Activated B cell treated with CpG ODN at 0.5 μM for 24 hours (primary cell): ENCODE measurements at regions of chr16 and their contacts with region 1.

Region 1: GRCh38 chr16:70454222-70455034 is at the start of gene FCSK:
- DNase-seq: peak; percentile 78
- ATAC-seq: peak; percentile 92
- H3K4me3 Mint-ChIP-seq: peak within 1 kb of the TSS; percentile 88
- H3K27ac Mint-ChIP-seq: peak within 1 kb of the TSS; percentile 89
- H3K4me1 Mint-ChIP-seq: peaks cover 16% of the 10 kb centered on the region
- H3K27me3 Mint-ChIP-seq: no peaks in the 10 kb centered on the region
- CTCF ChIP-seq: no peak
- total RNA-seq, gene FCSK: 20.1 and 21.4 TPM in 2 replicates

Region 2: DNA sequence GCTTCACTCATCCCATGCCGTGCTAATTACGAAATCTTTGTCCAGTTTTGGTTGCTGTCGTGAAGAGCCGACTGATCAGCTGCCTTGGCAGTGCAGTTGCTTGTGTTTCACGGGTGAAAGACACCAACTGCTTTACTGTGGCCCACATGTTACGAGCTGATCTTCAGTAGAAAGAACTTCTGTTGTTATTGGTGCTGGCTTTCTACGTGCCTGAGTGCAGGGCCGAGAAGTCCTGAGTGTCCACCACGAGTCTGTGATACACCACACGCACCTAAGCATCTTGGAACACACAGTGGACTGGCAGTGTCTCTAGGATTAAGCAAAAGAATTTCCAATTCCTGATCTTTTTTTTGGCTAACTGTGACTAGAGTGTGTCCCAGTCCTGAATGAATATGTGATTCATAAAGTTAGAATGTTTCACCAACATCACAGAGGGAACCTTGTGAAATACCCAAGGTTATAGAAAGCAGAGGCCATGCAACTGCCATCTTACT is 573.7 kb before region 1 on chr16:
- CTCF ChIA-PET with region 1: no interaction called
- POLR2A ChIA-PET with region 1: no interaction called
- intact Hi-C with region 1: no loop called
- DNase-seq: no peak
- ATAC-seq: no peak
- H3K4me3 Mint-ChIP-seq: no peak overlapping the region
- H3K27ac Mint-ChIP-seq: peak overlapping the region; percentile 30
- H3K4me1 Mint-ChIP-seq: no peaks in the 10 kb centered on the region
- H3K27me3 Mint-ChIP-seq: no peaks in the 10 kb centered on the region
- CTCF ChIP-seq: no peak

Region 3: DNA sequence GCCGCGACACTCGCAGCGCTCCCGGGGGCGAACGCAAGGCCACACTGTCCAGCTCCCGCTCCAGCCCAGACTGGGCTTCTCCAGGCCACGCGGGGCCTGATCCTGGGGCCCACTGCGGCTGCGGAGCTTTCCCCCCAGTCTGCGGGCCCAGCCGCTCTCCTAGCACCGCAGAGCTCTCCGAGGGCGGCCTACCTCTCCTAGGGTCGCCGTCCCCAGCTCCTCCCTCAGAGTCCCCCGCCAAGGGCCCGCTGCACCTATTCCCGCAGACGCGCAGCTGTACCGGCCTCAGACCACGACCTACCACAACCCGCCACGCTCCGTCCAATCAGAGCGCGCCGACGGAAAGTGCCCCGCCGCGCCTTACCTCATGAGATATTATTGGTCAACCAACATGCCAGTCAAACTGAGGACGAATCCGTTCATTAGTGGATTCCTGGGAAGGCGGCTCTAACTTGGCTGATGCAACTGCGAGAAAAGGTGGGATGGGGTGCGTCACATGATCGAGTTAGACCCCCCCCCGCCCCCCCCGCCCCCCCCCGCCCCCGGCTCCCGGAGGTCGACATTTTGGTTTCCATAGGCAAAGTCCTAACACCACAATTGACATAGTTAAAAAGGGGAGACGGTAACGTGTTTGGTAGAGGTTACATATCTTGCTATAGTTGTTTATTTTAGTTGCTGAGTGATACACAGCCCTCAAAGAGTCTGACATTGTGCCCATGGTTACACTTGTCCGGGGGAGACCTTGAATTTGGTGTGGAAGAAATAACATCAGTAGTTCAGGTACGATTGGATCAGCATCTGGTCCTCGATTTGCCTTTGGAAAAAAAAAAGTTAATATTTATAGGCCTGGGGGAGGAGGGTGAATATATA is 165.0 kb before region 1 on chr16 and contains the start of gene AARS1:
- CTCF ChIA-PET with region 1: no interaction called
- POLR2A ChIA-PET with region 1: interaction called, 11 read pairs
- intact Hi-C with region 1: no loop called
- DNase-seq: peak; percentile 84
- ATAC-seq: peak; percentile 96
- H3K4me3 Mint-ChIP-seq: peak within 1 kb of the TSS; percentile 98
- H3K27ac Mint-ChIP-seq: peak within 1 kb of the TSS; percentile 96
- H3K4me1 Mint-ChIP-seq: peaks cover 16% of the 10 kb centered on the region
- H3K27me3 Mint-ChIP-seq: no peaks in the 10 kb centered on the region
- CTCF ChIP-seq: no peak
- total RNA-seq, gene AARS1: 152 and 154 TPM in 2 replicates

Region 4: GRCh38 chr16:70395345-70395901 is 59.0 kb before region 1 on chr16:
- CTCF ChIA-PET with region 1: interaction called, 4 read pairs
- POLR2A ChIA-PET with region 1: interaction called, 5 read pairs
- intact Hi-C with region 1: loop called (anchors 1 kb)
- DNase-seq: peak; percentile 66
- ATAC-seq: peak; percentile 89
- H3K4me3 Mint-ChIP-seq: no peak overlapping the region
- H3K27ac Mint-ChIP-seq: no peak overlapping the region
- H3K4me1 Mint-ChIP-seq: peaks cover 5% of the 10 kb centered on the region
- H3K27me3 Mint-ChIP-seq: no peaks in the 10 kb centered on the region
- CTCF ChIP-seq: no peak

Region 5: DNA sequence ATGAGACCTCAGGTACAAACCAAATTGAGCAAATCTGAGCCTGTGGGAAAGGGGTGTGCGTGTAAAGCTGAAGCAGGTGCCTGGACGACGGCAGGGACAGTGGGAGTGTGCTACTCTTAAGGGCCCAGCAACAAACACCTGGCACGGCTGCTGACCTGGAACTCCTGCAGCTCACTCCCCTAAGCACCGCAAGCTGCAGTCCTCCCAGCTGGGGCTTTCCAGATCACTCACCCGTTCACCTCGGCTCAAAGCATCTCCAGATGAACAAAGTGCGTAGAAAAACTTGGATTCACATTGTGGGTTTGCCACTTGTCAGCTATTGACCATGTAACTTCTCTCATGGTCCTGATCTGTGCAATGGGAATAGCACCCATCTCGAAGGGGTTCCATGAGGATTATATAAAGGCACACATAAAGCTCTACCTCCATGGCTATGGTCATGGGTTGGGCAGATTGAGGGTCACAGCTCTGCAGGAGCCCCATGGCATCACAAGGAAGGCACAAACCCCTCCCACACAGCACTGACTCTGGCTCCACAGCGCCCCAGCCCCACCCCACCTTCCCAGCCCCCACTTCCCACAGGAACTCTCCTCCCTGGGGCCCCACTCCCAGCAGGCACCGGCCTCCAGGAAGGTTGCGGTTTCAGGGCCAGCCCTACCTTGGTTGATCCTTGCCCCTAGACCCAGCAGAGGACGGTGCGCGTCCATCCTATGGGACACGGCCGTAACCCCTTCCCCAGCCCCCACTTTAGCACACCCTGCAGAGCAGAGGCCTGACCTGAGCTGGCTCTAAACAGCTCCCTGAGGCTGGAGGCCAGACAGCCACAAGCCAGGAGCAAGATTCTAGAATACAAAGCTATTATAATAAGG is 37.4 kb before region 1 on chr16:
- CTCF ChIA-PET with region 1: no interaction called
- POLR2A ChIA-PET with region 1: interaction called, 7 read pairs
- intact Hi-C with region 1: loop called (anchors 5 kb)
- DNase-seq: peak; percentile 49
- ATAC-seq: peak; percentile 95
- H3K4me3 Mint-ChIP-seq: peak overlapping the region; percentile 50
- H3K27ac Mint-ChIP-seq: peak overlapping the region; percentile 78
- H3K4me1 Mint-ChIP-seq: peaks cover 60% of the 10 kb centered on the region
- H3K27me3 Mint-ChIP-seq: no peaks in the 10 kb centered on the region
- CTCF ChIP-seq: no peak

Region 6: GRCh38 chr16:70430667-70431536 is 23.5 kb before region 1 on chr16:
- CTCF ChIA-PET with region 1: no interaction called
- POLR2A ChIA-PET with region 1: interaction called, 38 read pairs
- intact Hi-C with region 1: loop called (anchors 1 kb)
- DNase-seq: peak; percentile 57
- ATAC-seq: peak; percentile 69
- H3K4me3 Mint-ChIP-seq: peak overlapping the region; percentile 75
- H3K27ac Mint-ChIP-seq: peak overlapping the region; percentile 97
- H3K4me1 Mint-ChIP-seq: peaks cover 83% of the 10 kb centered on the region
- H3K27me3 Mint-ChIP-seq: no peaks in the 10 kb centered on the region
- CTCF ChIP-seq: no peak

Region 7: GRCh38 chr16:70438969-70439862 is 15.2 kb before region 1 on chr16 and contains the start of gene ST3GAL2:
- CTCF ChIA-PET with region 1: interaction called, 6 read pairs
- POLR2A ChIA-PET with region 1: interaction called, 39 read pairs
- intact Hi-C with region 1: loop called (anchors 1 kb)
- DNase-seq: peak; percentile 90
- ATAC-seq: peak; percentile 96
- H3K4me3 Mint-ChIP-seq: peak within 1 kb of the TSS; percentile 96
- H3K27ac Mint-ChIP-seq: peak within 1 kb of the TSS; percentile 86
- H3K4me1 Mint-ChIP-seq: peaks cover 39% of the 10 kb centered on the region
- H3K27me3 Mint-ChIP-seq: no peaks in the 10 kb centered on the region
- CTCF ChIP-seq: no peak
- total RNA-seq, gene ST3GAL2: 51.5 and 57.4 TPM in 2 replicates

Region 8: DNA sequence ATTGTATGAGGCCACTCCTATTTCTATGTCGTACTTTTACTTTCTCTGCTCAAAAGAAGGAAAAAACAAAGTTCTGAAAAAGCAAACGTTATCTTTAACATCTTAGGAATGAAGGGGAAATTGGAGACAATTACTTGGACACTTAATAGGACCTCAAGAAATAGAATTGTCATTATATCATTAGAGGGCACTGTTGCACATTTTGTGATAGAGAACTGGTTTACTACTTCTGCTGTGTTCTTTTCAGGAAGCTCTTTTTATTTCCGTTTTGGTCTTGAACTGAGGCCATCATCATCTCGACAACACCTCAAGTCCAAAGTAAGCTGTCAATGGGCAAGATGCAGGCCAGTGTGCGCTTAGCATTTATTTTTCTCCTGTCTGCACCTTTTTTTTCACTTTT is 54.3 kb after region 1 on chr16:
- CTCF ChIA-PET with region 1: no interaction called
- POLR2A ChIA-PET with region 1: no interaction called
- intact Hi-C with region 1: loop called (anchors 5 kb)
- DNase-seq: no peak
- ATAC-seq: no peak
- H3K4me3 Mint-ChIP-seq: no peak overlapping the region
- H3K27ac Mint-ChIP-seq: no peak overlapping the region
- H3K4me1 Mint-ChIP-seq: peaks cover 8% of the 10 kb centered on the region
- H3K27me3 Mint-ChIP-seq: no peaks in the 10 kb centered on the region
- CTCF ChIP-seq: no peak

Region 9: GRCh38 chr16:70534971-70535370 is 80.5 kb after region 1 on chr16:
- CTCF ChIA-PET with region 1: no interaction called
- POLR2A ChIA-PET with region 1: no interaction called
- intact Hi-C with region 1: no loop called
- DNase-seq: no peak
- ATAC-seq: no peak
- H3K4me3 Mint-ChIP-seq: no peak overlapping the region
- H3K27ac Mint-ChIP-seq: no peak overlapping the region
- H3K4me1 Mint-ChIP-seq: peaks cover 2% of the 10 kb centered on the region
- H3K27me3 Mint-ChIP-seq: no peaks in the 10 kb centered on the region
- CTCF ChIP-seq: no peak